Activated CD4-positive, alpha-beta memory T cell treated with anti-CD3 and anti-CD28 coated beads for 36 hours (primary cell): ENCODE measurements at regions of chr9 and their contacts with region 1.

Region 1: DNA sequence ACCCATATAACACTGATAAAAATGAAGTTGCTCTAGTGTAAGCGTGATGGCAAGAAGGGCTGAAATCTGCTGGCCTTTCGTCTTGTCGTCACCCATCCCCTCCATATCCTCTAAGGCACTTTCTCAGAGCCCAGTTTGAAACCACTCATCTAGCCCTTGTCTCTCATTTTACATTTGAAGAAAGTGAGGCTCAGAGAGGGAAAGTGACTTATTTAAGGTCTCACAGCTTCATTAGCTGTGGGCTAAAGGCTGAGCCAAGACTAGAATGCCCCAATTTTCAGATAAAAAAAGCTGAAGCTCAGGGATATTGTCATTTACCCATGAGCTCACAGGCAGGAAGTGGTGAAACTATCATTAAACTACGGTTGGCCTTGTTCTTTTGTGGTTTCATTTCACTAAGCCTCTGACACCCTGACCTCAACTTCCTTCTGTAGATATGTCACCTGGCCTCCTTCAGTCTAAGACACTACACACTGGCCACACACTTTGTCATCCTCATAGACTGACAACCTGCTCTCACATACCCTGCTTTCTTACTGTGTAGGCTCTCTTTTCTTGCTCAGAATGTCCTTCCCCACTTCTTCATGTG is 176.7 kb upstream of the DMAC1 start:
- DNase-seq: peak; percentile 64
- H3K4me3 Mint-ChIP-seq: peak overlapping the region; percentile 26
- H3K27ac Mint-ChIP-seq: peak overlapping the region; percentile 84
- H3K4me1 Mint-ChIP-seq: peaks cover 63% of the 10 kb centered on the region
- H3K27me3 Mint-ChIP-seq: no peaks in the 10 kb centered on the region

Region 2: DNA sequence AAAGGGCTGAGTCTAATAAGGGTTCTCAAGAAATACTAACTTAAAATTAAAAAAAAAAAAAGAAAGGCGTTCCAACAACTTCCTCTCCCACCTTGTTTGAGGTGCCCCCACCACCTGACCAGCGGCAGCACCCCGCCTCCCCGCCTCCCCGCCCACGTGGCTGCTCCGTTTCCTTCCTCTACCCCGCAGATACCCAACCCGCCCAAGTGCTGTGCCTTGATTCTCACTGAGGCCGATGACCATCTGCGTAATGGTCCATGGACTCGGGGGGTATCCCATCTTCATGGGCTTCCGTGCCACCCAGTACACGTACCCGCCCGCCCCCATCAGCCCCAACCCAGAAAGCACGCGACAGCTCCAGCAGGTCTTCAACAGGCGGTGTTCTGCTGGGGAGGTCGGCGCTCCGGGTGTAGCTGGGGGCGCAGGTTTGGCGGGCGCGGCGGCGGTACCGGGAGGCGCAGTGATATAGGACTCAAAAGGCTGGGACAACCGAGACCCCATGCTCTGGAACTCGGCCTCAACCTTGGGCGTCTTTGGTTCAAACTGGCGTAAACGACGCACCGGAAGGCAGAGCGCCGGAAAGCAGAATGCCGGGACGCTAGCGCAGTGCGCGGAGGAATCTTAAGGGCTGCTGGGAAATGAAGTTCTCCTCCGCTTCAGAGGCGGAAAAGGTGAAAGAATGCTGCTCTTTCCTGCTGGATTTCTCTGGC is 176.9 kb before region 1 on chr9 and contains the start of gene DMAC1:
- CTCF ChIA-PET with region 1: no interaction called
- POLR2A ChIA-PET with region 1: no interaction called
- intact Hi-C with region 1: loop called (anchors 1 kb)
- DNase-seq: peak; percentile 85
- H3K4me3 Mint-ChIP-seq: peak within 1 kb of the TSS; percentile 86
- H3K27ac Mint-ChIP-seq: peak within 1 kb of the TSS; percentile 93
- H3K4me1 Mint-ChIP-seq: peaks cover 22% of the 10 kb centered on the region
- H3K27me3 Mint-ChIP-seq: no peaks in the 10 kb centered on the region
- total RNA-seq, gene DMAC1: 45.4 to 46.6 TPM

Region 3: DNA sequence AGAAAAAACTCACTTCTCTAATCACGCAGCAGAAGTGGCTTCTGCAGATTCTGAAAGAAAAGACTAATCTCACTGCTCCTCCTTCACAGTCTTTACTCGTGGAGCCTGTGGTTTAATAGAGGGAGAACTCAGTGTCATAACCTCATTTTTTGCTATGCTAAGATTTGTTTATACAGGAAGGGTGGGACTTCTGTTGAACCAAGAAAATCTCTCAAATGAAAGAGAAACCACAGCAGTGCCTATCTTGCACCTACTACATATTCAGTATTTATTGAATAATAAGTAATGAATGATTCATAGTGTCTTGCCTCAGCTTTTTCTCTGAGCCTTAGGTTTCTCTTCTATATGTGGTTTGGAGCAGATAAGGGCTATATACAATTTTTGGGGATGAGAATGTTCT is 40.6 kb before region 1 on chr9:
- CTCF ChIA-PET with region 1: no interaction called
- POLR2A ChIA-PET with region 1: no interaction called
- intact Hi-C with region 1: loop called (anchors 1 kb)
- DNase-seq: no peak
- H3K4me3 Mint-ChIP-seq: peak overlapping the region; percentile 24
- H3K27ac Mint-ChIP-seq: peak overlapping the region; percentile 64
- H3K4me1 Mint-ChIP-seq: peaks cover 29% of the 10 kb centered on the region
- H3K27me3 Mint-ChIP-seq: no peaks in the 10 kb centered on the region

Region 4: GRCh38 chr9:8053530-8053929 is 77.3 kb after region 1 on chr9:
- CTCF ChIA-PET with region 1: no interaction called
- POLR2A ChIA-PET with region 1: no interaction called
- intact Hi-C with region 1: no loop called
- DNase-seq: no peak
- H3K4me3 Mint-ChIP-seq: no peak overlapping the region
- H3K27ac Mint-ChIP-seq: no peak overlapping the region
- H3K4me1 Mint-ChIP-seq: no peaks in the 10 kb centered on the region
- H3K27me3 Mint-ChIP-seq: no peaks in the 10 kb centered on the region

Region 5: DNA sequence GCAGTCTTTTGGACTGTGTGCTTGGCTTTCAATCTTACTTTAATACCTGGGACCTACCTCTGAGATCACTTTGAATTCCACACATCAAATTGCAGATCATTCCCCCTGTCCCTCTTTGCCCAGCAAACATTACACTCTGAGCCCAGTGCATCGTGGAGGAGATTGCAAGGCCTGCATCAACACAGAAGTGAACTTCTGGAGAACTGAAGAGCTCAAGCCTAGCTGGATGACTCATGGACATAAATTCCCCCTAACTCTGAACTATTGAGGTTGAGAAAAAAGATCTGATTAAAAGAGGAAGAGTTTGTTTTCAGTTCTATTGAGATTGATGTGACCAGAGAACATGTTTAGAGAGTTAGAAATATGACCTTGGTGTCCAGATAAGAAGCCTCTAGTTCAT is 139.3 kb after region 1 on chr9:
- CTCF ChIA-PET with region 1: interaction called, 3 read pairs
- POLR2A ChIA-PET with region 1: no interaction called
- intact Hi-C with region 1: loop called (anchors 1 kb)
- DNase-seq: peak; percentile 18
- H3K4me3 Mint-ChIP-seq: no peak overlapping the region
- H3K27ac Mint-ChIP-seq: peak overlapping the region; percentile 44
- H3K4me1 Mint-ChIP-seq: peaks cover 17% of the 10 kb centered on the region
- H3K27me3 Mint-ChIP-seq: no peaks in the 10 kb centered on the region

Region 6: GRCh38 chr9:8429768-8430167 is 453.5 kb after region 1 on chr9:
- CTCF ChIA-PET with region 1: no interaction called
- POLR2A ChIA-PET with region 1: no interaction called
- intact Hi-C with region 1: loop called (anchors 1 kb)
- DNase-seq: no peak
- H3K4me3 Mint-ChIP-seq: no peak overlapping the region
- H3K27ac Mint-ChIP-seq: peak overlapping the region; percentile 80
- H3K4me1 Mint-ChIP-seq: peaks cover 30% of the 10 kb centered on the region
- H3K27me3 Mint-ChIP-seq: no peaks in the 10 kb centered on the region